A549 (cell line): ENCODE measurements at regions of chr19 and their contacts with region 1.

Region 1: GRCh38 chr19:44615863-44616247 is 2.5 kb downstream of the IGSF23 start:
- DNase-seq: no peak
- ATAC-seq: no peak
- H3K4me3 ChIP-seq: no peak overlapping the region
- H3K27ac ChIP-seq: peak overlapping the region; percentile 2 to 34; a peak in 3 of 6 replicates
- H3K4me1 ChIP-seq: peaks cover 25% of the 10 kb centered on the region; the same call in 2 of the 3 replicates
- CTCF ChIP-seq: no peak
- EP300 ChIP-seq: no peak
- POLR2A ChIP-seq: no peak
- RAD21 ChIP-seq: no peak

Region 2: GRCh38 chr19:44539236-44539826 is 76.5 kb before region 1 on chr19:
- CTCF ChIA-PET with region 1: no interaction called
- POLR2A ChIA-PET with region 1: no interaction called
- DNase-seq: no peak
- ATAC-seq: peak; percentile 53 to 54; a peak in 3 of 6 replicates
- H3K4me3 ChIP-seq: no peak overlapping the region
- H3K27ac ChIP-seq: no peak overlapping the region
- H3K4me1 ChIP-seq: no peaks in the 10 kb centered on the region
- CTCF ChIP-seq: no peak
- EP300 ChIP-seq: no peak
- POLR2A ChIP-seq: no peak
- RAD21 ChIP-seq: no peak

Region 3: DNA sequence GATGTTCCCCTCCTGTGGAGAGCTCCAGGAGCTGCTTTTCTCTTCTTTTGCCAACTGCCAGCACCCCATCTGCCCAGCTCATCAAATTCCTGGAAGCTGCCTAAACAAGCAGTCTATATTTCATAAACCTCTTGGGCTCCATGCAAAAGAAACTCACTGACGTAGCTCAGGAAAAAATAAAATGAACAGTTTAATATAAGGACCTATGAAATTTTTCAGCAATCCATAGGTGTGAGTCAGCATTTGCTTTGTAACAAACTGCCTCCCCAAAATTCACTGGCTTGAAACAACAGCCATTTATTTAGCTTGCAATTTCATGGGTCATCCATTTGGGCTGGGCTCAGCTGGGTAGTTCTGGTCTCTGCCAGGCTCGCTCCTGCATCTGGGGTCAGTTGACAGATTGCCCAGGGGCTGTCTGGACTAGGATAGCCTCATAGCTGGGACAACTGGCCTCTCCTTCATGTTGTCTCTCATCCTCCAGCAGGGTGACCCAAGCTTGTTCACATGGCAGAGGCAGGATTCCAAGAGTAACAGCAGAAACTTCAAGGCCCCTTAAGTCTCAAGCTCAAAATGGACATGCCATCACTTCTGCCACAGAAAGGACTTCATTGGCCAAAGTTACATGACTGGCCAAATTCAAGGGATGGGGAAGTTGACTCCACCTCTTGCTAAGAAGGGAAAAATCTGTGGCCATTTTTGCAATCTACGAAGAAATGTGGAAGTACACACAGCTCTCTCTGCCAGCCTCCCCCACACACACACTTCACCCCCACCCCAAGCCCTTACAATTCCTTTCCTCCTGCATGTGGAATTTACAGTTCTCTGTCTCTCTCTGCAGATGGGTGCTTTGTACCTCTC is 20.0 kb after region 1 on chr19:
- CTCF ChIA-PET with region 1: interaction called, 103 read pairs
- POLR2A ChIA-PET with region 1: interaction called, 3 read pairs
- DNase-seq: no peak
- ATAC-seq: peak; percentile 47 to 57; a peak in 5 of 6 replicates
- H3K4me3 ChIP-seq: no peak overlapping the region
- H3K27ac ChIP-seq: peak overlapping the region; percentile 84 to 97
- H3K4me1 ChIP-seq: peaks cover 60% of the 10 kb centered on the region
- CTCF ChIP-seq: no peak
- EP300 ChIP-seq: no peak
- POLR2A ChIP-seq: no peak
- RAD21 ChIP-seq: no peak